Calu3 (cell line): ENCODE measurements at regions of chr3 and their contacts with region 1.

Region 1: GRCh38 chr3:4271834-4272233 is 31.3 kb upstream of the SETMAR start:
- DNase-seq: peak; percentile 6
- H3K4me3 Mint-ChIP-seq: no peak overlapping the region
- H3K27ac Mint-ChIP-seq: no peak overlapping the region
- H3K4me1 Mint-ChIP-seq: no peaks in the 10 kb centered on the region
- H3K27me3 Mint-ChIP-seq: peaks cover 14% of the 10 kb centered on the region
- CTCF ChIP-seq: no peak

Region 2: GRCh38 chr3:3603351-3603750 is 668.5 kb before region 1 on chr3:
- CTCF ChIA-PET with region 1: no interaction called
- intact Hi-C with region 1: loop called (anchors 5 kb)
- DNase-seq: no peak
- H3K4me3 Mint-ChIP-seq: no peak overlapping the region
- H3K27ac Mint-ChIP-seq: no peak overlapping the region
- H3K4me1 Mint-ChIP-seq: peaks cover 8% of the 10 kb centered on the region
- H3K27me3 Mint-ChIP-seq: no peaks in the 10 kb centered on the region
- CTCF ChIP-seq: no peak

Region 3: GRCh38 chr3:4149296-4149695 is 122.5 kb before region 1 on chr3:
- CTCF ChIA-PET with region 1: no interaction called
- intact Hi-C with region 1: no loop called
- DNase-seq: no peak
- H3K4me3 Mint-ChIP-seq: no peak overlapping the region
- H3K27ac Mint-ChIP-seq: no peak overlapping the region
- H3K4me1 Mint-ChIP-seq: no peaks in the 10 kb centered on the region
- H3K27me3 Mint-ChIP-seq: no peaks in the 10 kb centered on the region
- CTCF ChIP-seq: no peak

Region 4: DNA sequence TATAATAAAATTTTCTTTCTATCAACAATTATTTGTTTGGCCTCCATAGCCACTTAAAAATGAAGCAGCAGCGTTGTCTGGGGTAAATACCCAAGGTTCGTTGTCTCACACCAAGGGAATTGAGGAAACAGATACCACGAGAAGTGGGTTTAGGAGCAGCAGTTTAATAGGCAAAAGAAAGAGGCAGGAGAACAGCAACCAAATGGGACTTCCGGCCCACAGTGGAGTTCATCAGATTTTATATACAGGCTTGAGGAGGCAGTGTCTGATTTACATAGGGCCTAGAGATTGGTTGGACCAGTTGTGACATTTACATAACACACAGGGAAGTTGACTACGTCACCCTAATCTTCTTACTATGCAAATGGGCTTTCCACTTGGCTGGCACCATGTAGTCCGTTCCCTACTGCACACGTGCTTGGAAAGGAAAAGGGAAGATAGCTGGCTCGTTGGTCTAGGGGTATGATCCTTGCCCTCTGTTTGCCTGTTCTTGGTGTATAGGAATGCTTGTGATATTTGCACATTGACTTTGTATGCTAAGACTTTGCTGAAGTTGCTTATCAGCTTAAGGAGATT is 30.2 kb before region 1 on chr3:
- CTCF ChIA-PET with region 1: no interaction called
- intact Hi-C with region 1: no loop called
- DNase-seq: no peak
- H3K4me3 Mint-ChIP-seq: no peak overlapping the region
- H3K27ac Mint-ChIP-seq: no peak overlapping the region
- H3K4me1 Mint-ChIP-seq: no peaks in the 10 kb centered on the region
- H3K27me3 Mint-ChIP-seq: no peaks in the 10 kb centered on the region
- CTCF ChIP-seq: no peak